PC-9 (cell line): ENCODE measurements at regions of chr7 and their contacts with region 1.

Region 1: GRCh38 chr7:99374103-99375064 is at the start of gene ARPC1B:
- DNase-seq: peak; percentile 57 to 82
- H3K4me3 ChIP-seq: peak within 1 kb of the TSS; percentile 63
- H3K27ac ChIP-seq: no peak within 1 kb of the TSS
- H3K4me1 ChIP-seq: peaks cover 21% of the 10 kb centered on the region
- H3K27me3 ChIP-seq: no peaks in the 10 kb centered on the region
- CTCF ChIP-seq: no peak
- total RNA-seq, gene ARPC1B: 276 and 289 TPM in 2 replicates

Region 2: GRCh38 chr7:99267481-99267840 is 106.9 kb before region 1 on chr7:
- CTCF ChIA-PET with region 1: no interaction called
- POLR2A ChIA-PET with region 1: no interaction called
- intact Hi-C with region 1: loop called (anchors 10 kb)
- DNase-seq: peak; percentile 79 to 93
- H3K4me3 ChIP-seq: no peak overlapping the region
- H3K27ac ChIP-seq: peak overlapping the region; percentile 90
- H3K4me1 ChIP-seq: peaks cover 41% of the 10 kb centered on the region
- H3K27me3 ChIP-seq: no peaks in the 10 kb centered on the region
- CTCF ChIP-seq: no peak

Region 3: DNA sequence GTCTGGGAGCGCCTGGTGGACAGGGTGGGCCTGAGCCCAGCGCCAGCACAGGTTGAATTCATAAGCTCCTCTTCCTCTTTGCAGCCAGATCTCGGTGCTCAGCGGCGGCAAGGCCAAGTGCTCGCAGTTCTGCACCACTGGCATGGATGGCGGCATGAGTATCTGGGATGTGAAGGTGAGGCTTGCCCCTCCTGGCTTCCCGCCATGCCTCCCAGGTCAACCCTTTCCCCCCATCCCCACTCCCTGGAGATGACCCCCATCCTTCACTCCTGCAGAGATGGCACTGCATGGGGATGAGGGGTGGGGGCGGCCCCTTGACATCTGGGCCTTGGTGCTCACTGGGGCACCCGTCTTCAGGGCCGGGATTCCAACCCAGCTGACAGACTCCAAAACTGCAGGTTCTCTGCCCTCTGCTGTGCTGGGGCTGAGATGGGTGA is 19.6 kb after region 1 on chr7:
- CTCF ChIA-PET with region 1: interaction called, 13 read pairs
- POLR2A ChIA-PET with region 1: no interaction called
- intact Hi-C with region 1: no loop called
- DNase-seq: no peak
- H3K4me3 ChIP-seq: no peak overlapping the region
- H3K27ac ChIP-seq: no peak overlapping the region
- H3K4me1 ChIP-seq: no peaks in the 10 kb centered on the region
- H3K27me3 ChIP-seq: no peaks in the 10 kb centered on the region
- CTCF ChIP-seq: no peak

Region 4: GRCh38 chr7:99472561-99473243 is 98.3 kb after region 1 on chr7 and contains the start of gene ZNF789:
- CTCF ChIA-PET with region 1: no interaction called
- POLR2A ChIA-PET with region 1: no interaction called
- intact Hi-C with region 1: no loop called
- DNase-seq: peak; percentile 91 to 99
- H3K4me3 ChIP-seq: peak within 1 kb of the TSS; percentile 76
- H3K27ac ChIP-seq: peak within 1 kb of the TSS; percentile 89
- H3K4me1 ChIP-seq: peaks cover 10% of the 10 kb centered on the region
- H3K27me3 ChIP-seq: no peaks in the 10 kb centered on the region
- CTCF ChIP-seq: no peak
- total RNA-seq, gene ZNF789: 30.8 and 38.8 TPM in 2 replicates

Region 5: DNA sequence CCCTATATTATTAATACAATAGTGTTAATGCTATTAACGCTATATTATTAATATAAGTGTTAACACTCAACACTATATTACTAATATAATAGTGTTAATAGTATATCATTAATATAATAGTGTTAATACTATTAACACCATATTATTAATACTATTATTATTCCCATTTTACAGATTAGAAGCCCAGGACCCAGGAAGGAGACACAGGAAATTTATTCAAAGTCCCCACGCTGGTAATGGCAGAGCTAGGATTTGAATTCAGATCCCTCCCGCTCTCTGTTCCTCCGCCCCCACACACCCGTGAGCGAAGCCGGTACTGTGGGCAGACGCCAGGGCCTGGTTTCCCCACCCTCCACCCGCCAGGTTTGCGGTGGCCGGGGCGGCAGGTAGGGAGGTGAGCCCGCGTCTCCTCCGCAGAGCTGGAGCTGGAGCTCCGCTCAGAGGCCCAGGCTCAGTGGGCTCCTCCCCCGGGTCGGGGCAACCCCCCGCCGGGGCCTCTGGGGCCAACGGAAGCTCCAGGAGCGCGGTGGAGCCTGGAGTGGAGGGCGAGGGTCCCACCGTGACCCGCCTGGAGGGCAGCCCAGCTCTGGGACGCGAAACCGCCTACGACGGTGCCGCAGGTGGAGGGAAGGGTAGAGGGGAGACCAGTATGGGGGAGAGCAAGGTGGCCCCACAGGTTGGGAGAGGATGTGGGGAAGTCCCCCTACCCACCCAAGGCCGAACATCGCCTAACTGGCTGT is 223.5 kb after region 1 on chr7 and contains the start of gene TMEM225B:
- CTCF ChIA-PET with region 1: no interaction called
- POLR2A ChIA-PET with region 1: no interaction called
- intact Hi-C with region 1: no loop called
- DNase-seq: no peak
- H3K4me3 ChIP-seq: no peak within 1 kb of the TSS
- H3K27ac ChIP-seq: no peak within 1 kb of the TSS
- H3K4me1 ChIP-seq: no peaks in the 10 kb centered on the region
- H3K27me3 ChIP-seq: 0 out of 2 replicates have a peak, but pooled peaks cover 6% of the 10 kb centered on the region
- CTCF ChIP-seq: no peak
- total RNA-seq, gene TMEM225B: 1.5 and 1.8 TPM in 2 replicates

Region 6: GRCh38 chr7:99616359-99617191 is 242.2 kb after region 1 on chr7 and contains the start of gene ZSCAN25:
- CTCF ChIA-PET with region 1: no interaction called
- POLR2A ChIA-PET with region 1: interaction called, 17 read pairs
- intact Hi-C with region 1: no loop called
- DNase-seq: peak; percentile 79 to 91
- H3K4me3 ChIP-seq: peak within 1 kb of the TSS; percentile 66
- H3K27ac ChIP-seq: no peak within 1 kb of the TSS
- H3K4me1 ChIP-seq: peaks cover 24% of the 10 kb centered on the region
- H3K27me3 ChIP-seq: 0 out of 2 replicates have a peak, but pooled peaks cover 5% of the 10 kb centered on the region
- CTCF ChIP-seq: peak; percentile 60; the same call in 1 of the 2 replicates
- total RNA-seq, gene ZSCAN25: 20.5 and 21.8 TPM in 2 replicates